Panc1 (cell line): ENCODE measurements at regions of chr4 and their contacts with region 1.

Region 1: DNA sequence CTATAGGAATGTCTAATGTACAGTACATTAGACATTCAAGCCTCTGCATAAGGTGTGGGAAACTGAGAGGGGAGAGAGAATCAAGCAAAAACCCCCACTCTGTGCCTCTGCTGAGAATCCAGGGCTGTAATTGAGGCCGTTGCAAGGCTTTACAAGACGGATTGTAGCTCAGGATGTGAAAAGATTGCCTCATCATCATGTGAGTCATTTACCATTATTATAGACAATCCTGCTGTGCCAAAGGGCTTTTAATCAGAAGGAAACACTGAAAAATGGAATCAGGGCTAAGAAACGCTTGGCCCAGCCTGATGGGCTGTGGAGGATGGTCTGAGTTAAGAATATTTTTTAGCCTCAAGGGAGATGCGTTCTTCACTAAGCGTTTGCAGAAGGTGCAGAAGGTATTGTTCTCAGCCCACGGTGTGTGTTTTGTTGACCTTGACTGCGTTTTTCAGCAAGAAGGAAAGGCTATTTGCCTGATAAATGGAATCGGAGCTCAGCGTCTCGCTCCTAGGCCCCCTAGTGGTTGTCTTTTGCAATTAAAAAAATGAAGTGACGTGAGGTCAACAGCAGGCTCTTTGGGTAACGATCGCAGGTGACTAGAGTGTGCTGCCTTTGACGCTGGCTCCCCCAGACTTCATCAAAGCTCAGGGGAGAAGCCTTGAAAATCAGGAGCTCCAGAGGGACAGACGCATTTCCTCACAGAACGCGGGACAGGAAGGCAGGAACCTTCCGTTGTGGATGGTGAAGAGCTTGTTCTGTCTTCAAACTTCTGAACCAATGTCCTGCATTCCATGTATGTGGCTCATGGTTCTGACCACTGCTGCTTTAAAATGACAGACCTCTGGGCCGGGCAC is 18.1 kb upstream of the CHRNA9 start:
- DNase-seq: peak; percentile 88
- ATAC-seq: peak; percentile 87
- H3K4me3 ChIP-seq: peak overlapping the region; percentile 25 to 46
- H3K27ac ChIP-seq: peak overlapping the region; percentile 88
- H3K4me1 ChIP-seq: peaks cover 10% of the 10 kb centered on the region
- H3K27me3 ChIP-seq: no peaks in the 10 kb centered on the region
- CTCF ChIP-seq: peak; percentile 82

Region 2: GRCh38 chr4:40056716-40057585 is 260.1 kb before region 1 on chr4 and contains the start of gene N4BP2:
- CTCF ChIA-PET with region 1: interaction called, 4 read pairs
- POLR2A ChIA-PET with region 1: no interaction called
- in situ Hi-C with region 1: no loop called
- intact Hi-C with region 1: loop called (anchors 10 kb)
- DNase-seq: no peak
- ATAC-seq: peak; percentile 81
- H3K4me3 ChIP-seq: peak within 1 kb of the TSS; percentile 73 to 83
- H3K27ac ChIP-seq: peak within 1 kb of the TSS; percentile 96
- H3K4me1 ChIP-seq: peaks cover 6% of the 10 kb centered on the region; the same call in 1 of the 2 replicates
- H3K27me3 ChIP-seq: no peaks in the 10 kb centered on the region
- CTCF ChIP-seq: peak; percentile 90
- total RNA-seq, gene N4BP2: 8.5 TPM

Region 3: DNA sequence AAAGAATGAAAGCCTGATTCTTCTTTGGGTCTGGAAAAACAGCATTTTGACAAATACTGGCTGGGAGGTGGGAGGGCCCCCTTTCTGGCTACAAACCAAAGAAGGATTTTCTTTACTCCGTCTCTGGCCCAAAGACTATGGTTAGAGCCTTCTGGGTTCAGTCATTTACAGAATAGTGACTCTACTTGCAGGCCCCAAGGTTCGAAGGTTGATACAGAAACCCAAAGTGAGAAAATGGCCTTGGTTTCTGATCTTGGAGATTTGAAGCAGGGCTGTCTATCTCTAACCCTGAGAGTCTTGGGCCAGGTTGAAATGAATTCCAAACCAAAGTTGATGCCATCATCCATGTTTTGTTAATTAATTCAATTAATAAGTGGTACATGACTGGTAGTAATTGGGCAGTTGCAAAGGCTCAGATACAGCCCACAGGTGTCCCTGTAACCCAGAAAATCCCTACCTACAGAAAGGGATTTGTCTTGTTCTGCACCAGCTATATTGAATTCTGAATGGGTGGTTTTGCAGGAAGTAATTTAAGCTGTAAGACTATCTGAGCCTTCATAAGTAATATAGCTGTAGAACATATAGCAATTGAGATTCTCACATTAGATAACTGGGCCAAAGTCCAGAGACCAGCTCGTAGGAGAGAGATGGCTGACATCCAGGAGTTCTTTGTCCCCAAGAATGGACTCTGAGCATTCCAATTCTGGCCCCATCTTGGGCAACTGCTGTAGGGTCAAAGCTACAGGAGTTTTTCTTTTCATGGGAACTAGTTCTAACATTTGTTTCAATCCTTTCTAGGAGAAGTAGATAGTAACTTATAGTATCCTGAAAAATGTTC is 52.6 kb after region 1 on chr4:
- CTCF ChIA-PET with region 1: no interaction called
- POLR2A ChIA-PET with region 1: no interaction called
- in situ Hi-C with region 1: no loop called
- intact Hi-C with region 1: no loop called
- DNase-seq: no peak
- ATAC-seq: no peak
- H3K4me3 ChIP-seq: no peak overlapping the region
- H3K27ac ChIP-seq: no peak overlapping the region
- H3K4me1 ChIP-seq: no peaks in the 10 kb centered on the region
- H3K27me3 ChIP-seq: no peaks in the 10 kb centered on the region
- CTCF ChIP-seq: no peak

Region 4: GRCh38 chr4:40455340-40455902 is 138.4 kb after region 1 on chr4:
- CTCF ChIA-PET with region 1: interaction called, 18 read pairs
- POLR2A ChIA-PET with region 1: no interaction called
- in situ Hi-C with region 1: no loop called
- intact Hi-C with region 1: no loop called
- DNase-seq: no peak
- ATAC-seq: no peak
- H3K4me3 ChIP-seq: no peak overlapping the region
- H3K27ac ChIP-seq: no peak overlapping the region
- H3K4me1 ChIP-seq: no peaks in the 10 kb centered on the region
- H3K27me3 ChIP-seq: no peaks in the 10 kb centered on the region
- CTCF ChIP-seq: no peak

Region 5: DNA sequence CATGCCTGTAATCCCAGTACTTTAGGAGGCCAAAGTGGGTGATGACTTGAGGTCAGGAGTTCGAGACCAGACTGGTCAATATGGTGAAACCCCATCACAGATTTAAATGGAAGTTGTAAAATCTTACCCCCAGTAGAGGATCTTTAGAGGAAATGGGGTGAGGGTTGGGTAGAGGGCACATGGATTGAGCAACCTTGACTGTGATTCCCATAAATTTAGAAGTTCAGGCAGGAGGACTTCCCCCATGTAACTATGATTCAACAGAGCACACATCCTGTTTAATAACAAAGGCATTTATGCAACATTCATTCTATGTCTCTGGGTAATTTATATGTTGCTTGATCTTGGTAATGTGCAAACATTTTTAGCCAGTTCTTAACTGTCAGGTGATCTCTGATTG is 169.5 kb after region 1 on chr4:
- CTCF ChIA-PET with region 1: no interaction called
- POLR2A ChIA-PET with region 1: interaction called, 14 read pairs
- in situ Hi-C with region 1: no loop called
- intact Hi-C with region 1: no loop called
- DNase-seq: no peak
- ATAC-seq: no peak
- H3K4me3 ChIP-seq: no peak overlapping the region
- H3K27ac ChIP-seq: no peak overlapping the region
- H3K4me1 ChIP-seq: no peaks in the 10 kb centered on the region
- H3K27me3 ChIP-seq: no peaks in the 10 kb centered on the region
- CTCF ChIP-seq: no peak